ENCODE measurements at regions of chr2 and their contacts with region 1.

Region 1: GRCh38 chr2:218269899-218270720 is at the starts of genes AAMP and PNKD:
- DNase-seq: peak; percentile 100
- ATAC-seq: peak; percentile 94
- H3K4me3 Mint-ChIP-seq: peak within 1 kb of the TSS; percentile 96
- H3K27ac Mint-ChIP-seq: peak within 1 kb of the TSS; percentile 95
- H3K4me1 Mint-ChIP-seq: peaks cover 41% of the 10 kb centered on the region
- H3K27me3 Mint-ChIP-seq: no peaks in the 10 kb centered on the region
- total RNA-seq, gene AAMP: 52.6 to 56.2 TPM
- total RNA-seq, gene PNKD: 36.7 to 37.6 TPM

Region 2: DNA sequence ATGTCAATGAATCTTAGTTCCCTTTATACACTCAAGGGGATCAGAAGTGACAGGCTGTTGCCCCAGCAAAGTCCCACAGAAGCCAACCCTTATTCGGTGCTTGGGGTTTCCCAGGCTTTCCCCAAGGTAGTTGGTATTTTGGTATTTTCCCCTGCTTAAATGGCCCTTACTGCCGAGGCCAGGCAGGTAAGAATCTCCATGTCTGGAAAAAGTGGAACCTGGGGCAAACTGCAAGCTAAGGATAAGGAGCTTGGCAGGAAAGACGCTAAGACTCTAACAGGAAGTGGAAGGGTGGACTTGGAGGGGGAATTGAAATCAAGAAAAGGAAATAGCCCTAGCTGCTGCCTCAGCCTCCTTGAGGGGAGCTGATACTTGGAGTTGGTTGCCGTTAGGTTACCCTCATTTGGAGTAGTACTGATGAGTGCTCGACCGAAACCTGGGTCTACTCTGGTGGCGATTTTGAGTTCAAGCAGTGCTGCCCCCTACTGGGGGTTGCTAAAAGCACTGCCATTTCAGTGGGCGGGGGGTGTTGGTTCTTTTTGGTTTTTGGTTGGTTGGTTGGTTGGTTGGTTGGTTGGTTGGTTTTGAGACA is 12.6 kb before region 1 on chr2:
- CTCF ChIA-PET with region 1: interaction called, 12 read pairs
- POLR2A ChIA-PET with region 1: interaction called, 5 read pairs
- DNase-seq: peak; percentile 76
- ATAC-seq: peak; percentile 61
- H3K4me3 Mint-ChIP-seq: peak overlapping the region; percentile 50
- H3K27ac Mint-ChIP-seq: peak overlapping the region; percentile 88
- H3K4me1 Mint-ChIP-seq: peaks cover 22% of the 10 kb centered on the region
- H3K27me3 Mint-ChIP-seq: no peaks in the 10 kb centered on the region

Region 3: GRCh38 chr2:218292048-218293014 is 22.2 kb after region 1 on chr2 and contains the start of gene TMBIM1:
- CTCF ChIA-PET with region 1: interaction called, 158 read pairs
- POLR2A ChIA-PET with region 1: interaction called, 23 read pairs
- DNase-seq: peak; percentile 81
- ATAC-seq: peak; percentile 90
- H3K4me3 Mint-ChIP-seq: peak within 1 kb of the TSS; percentile 80
- H3K27ac Mint-ChIP-seq: peak within 1 kb of the TSS; percentile 89
- H3K4me1 Mint-ChIP-seq: peaks cover 60% of the 10 kb centered on the region
- H3K27me3 Mint-ChIP-seq: no peaks in the 10 kb centered on the region
- total RNA-seq, gene TMBIM1: 52.9 to 58.9 TPM

Region 4: GRCh38 chr2:218357236-218358159 is 87.4 kb after region 1 on chr2:
- CTCF ChIA-PET with region 1: interaction called, 16 read pairs
- POLR2A ChIA-PET with region 1: no interaction called
- DNase-seq: no peak
- ATAC-seq: no peak
- H3K4me3 Mint-ChIP-seq: no peak overlapping the region
- H3K27ac Mint-ChIP-seq: peak overlapping the region; percentile 66
- H3K4me1 Mint-ChIP-seq: peaks cover 2% of the 10 kb centered on the region
- H3K27me3 Mint-ChIP-seq: peaks cover 6% of the 10 kb centered on the region

Region 5: DNA sequence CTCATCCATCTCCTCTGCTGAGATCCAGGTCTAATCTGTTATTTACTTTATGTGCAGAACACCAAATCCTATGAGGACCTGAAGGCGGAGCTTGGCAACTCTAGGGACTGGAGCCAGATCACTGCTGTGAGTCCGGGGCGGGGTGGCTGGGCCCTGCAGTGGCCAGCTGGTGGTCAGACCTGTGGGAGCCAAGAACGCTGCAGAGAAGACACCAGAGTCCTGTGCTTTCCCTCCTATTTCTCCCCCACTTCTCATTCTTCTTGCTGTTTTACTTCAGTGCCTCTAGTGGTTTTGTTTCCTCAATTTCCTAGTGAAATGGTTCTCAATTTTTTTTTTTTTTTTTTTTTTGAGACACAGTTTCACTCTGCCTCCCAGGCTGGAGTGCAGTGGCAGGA is 168.5 kb after region 1 on chr2:
- CTCF ChIA-PET with region 1: no interaction called
- POLR2A ChIA-PET with region 1: no interaction called
- DNase-seq: no peak
- ATAC-seq: no peak
- H3K4me3 Mint-ChIP-seq: no peak overlapping the region
- H3K27ac Mint-ChIP-seq: no peak overlapping the region
- H3K4me1 Mint-ChIP-seq: no peaks in the 10 kb centered on the region
- H3K27me3 Mint-ChIP-seq: peaks cover 2% of the 10 kb centered on the region

Measured in activated CD8-positive, alpha-beta T cell treated with anti-CD3 and anti-CD28 coated beads, Interleukin-2, amount 10 ng/mL, durations not matched to agents 7 days and 5 days (primary cell).